ENCODE measurements at regions of chr1 and their contacts with region 1.

Region 1: GRCh38 chr1:221708987-221709386 is 32.9 kb downstream of the DUSP10 start:
- DNase-seq: peak; percentile 47
- ATAC-seq: no peak
- H3K4me3 Mint-ChIP-seq: no peak overlapping the region
- H3K27ac Mint-ChIP-seq: peak overlapping the region; percentile 83
- H3K4me1 Mint-ChIP-seq: peaks cover 58% of the 10 kb centered on the region
- H3K27me3 Mint-ChIP-seq: no peaks in the 10 kb centered on the region

Region 2: DNA sequence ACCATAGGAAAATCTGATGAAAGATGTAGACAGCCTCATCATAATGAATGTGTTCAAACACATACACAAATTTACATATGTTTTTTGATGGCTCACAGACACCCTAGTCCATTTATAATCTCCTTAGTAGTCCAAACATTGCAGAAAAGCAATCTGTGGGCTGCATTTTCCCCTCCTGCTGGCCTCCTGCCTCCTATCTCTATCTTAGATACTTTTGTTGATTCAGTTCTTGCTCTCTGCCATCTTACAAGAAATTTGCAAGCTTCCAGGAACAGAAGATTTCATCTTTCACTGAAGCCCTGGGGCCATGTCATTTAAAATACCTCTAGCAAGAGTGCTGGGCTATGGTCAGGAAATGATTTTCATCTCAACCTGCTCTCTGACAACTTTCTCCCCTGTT is 17.7 kb before region 1 on chr1:
- CTCF ChIA-PET with region 1: no interaction called
- POLR2A ChIA-PET with region 1: interaction called, 3 read pairs
- intact Hi-C with region 1: loop called in 1 of 2 experiments (anchors 2 kb)
- DNase-seq: no peak
- ATAC-seq: no peak
- H3K4me3 Mint-ChIP-seq: no peak overlapping the region
- H3K27ac Mint-ChIP-seq: no peak overlapping the region
- H3K4me1 Mint-ChIP-seq: peaks cover 5% of the 10 kb centered on the region
- H3K27me3 Mint-ChIP-seq: no peaks in the 10 kb centered on the region

Region 3: GRCh38 chr1:221725735-221726672 is 17.0 kb after region 1 on chr1:
- CTCF ChIA-PET with region 1: interaction called, 6 read pairs
- POLR2A ChIA-PET with region 1: interaction called, 10 read pairs
- intact Hi-C with region 1: loop called (anchors 1 kb)
- DNase-seq: no peak
- ATAC-seq: peak; percentile 86
- H3K4me3 Mint-ChIP-seq: peak overlapping the region; percentile 39
- H3K27ac Mint-ChIP-seq: peak overlapping the region; percentile 94
- H3K4me1 Mint-ChIP-seq: peaks cover 78% of the 10 kb centered on the region
- H3K27me3 Mint-ChIP-seq: no peaks in the 10 kb centered on the region

Region 4: GRCh38 chr1:221753828-221754188 is 44.8 kb after region 1 on chr1:
- CTCF ChIA-PET with region 1: no interaction called
- POLR2A ChIA-PET with region 1: no interaction called
- intact Hi-C with region 1: loop called in 1 of 2 experiments (anchors 1 kb)
- DNase-seq: no peak
- ATAC-seq: peak; percentile 47
- H3K4me3 Mint-ChIP-seq: no peak overlapping the region
- H3K27ac Mint-ChIP-seq: peak overlapping the region; percentile 77
- H3K4me1 Mint-ChIP-seq: peaks cover 37% of the 10 kb centered on the region
- H3K27me3 Mint-ChIP-seq: peaks cover 5% of the 10 kb centered on the region

Region 5: GRCh38 chr1:221766210-221766609 is 57.2 kb after region 1 on chr1:
- CTCF ChIA-PET with region 1: no interaction called
- POLR2A ChIA-PET with region 1: no interaction called
- intact Hi-C with region 1: no loop called
- DNase-seq: no peak
- ATAC-seq: no peak
- H3K4me3 Mint-ChIP-seq: no peak overlapping the region
- H3K27ac Mint-ChIP-seq: no peak overlapping the region
- H3K4me1 Mint-ChIP-seq: peaks cover 11% of the 10 kb centered on the region
- H3K27me3 Mint-ChIP-seq: no peaks in the 10 kb centered on the region

Region 6: DNA sequence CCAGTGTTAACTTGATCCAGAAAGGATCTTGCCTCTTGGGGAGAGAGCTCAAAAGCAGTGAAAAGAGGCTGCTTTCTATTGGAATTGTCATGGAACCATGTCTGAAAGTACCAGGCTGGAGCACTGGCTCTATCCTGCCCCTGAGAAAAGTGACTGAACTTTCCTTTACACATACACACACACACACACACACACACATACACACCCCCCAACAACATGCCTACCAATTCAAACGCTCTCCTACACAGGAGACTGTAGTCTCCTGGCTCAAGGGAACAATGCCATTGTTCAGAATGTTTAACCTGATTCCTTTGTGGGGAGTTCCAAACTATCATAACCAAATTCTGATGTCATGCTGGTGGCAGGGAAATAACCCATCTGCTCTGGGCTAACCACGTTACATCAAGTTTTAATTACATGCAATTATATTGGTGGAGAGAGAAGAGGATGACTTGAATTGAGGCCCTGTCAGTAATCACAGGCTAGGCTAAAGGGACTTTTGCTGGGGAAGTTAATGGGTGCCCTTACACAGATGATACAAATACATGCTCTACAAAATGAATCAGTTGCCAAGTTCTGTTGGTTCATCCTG is 85.2 kb after region 1 on chr1:
- CTCF ChIA-PET with region 1: no interaction called
- POLR2A ChIA-PET with region 1: no interaction called
- intact Hi-C with region 1: loop called (anchors 1 kb)
- DNase-seq: peak; percentile 54
- ATAC-seq: peak; percentile 91
- H3K4me3 Mint-ChIP-seq: no peak overlapping the region
- H3K27ac Mint-ChIP-seq: peak overlapping the region; percentile 89
- H3K4me1 Mint-ChIP-seq: peaks cover 34% of the 10 kb centered on the region
- H3K27me3 Mint-ChIP-seq: no peaks in the 10 kb centered on the region

Region 7: DNA sequence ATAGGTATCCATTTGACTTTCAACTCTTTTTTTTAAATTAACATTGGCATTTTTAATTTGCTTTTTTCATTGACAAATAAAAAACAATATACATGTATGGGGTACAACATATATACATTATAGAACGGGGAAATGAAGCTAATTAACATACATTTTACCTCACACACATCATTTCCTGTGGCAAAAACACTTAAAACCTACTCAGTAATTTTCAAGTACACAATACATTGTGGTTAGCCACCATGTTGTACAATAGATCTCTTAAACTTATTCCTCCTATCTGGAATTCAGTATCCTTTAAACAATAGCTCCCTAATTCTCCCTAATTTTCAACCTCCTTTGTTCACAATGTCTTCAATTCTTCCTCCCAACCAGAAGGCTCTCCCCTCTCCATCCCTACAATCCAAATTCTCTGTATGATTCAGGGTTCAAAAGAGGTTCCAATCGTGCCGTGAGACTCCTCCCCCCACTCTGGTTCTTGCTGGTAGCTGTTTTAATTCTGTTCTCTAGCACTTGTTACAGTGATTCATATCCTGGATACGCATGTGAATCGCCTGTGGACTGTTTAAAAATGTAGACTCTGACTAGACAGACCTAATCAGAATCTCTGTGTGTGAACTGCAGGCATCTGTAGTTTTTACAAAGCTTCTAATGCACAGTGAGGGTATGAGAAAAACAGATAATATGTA is 120.5 kb after region 1 on chr1:
- CTCF ChIA-PET with region 1: no interaction called
- POLR2A ChIA-PET with region 1: no interaction called
- intact Hi-C with region 1: loop called (anchors 1 kb)
- DNase-seq: peak; percentile 79
- ATAC-seq: peak; percentile 96
- H3K4me3 Mint-ChIP-seq: peak overlapping the region; percentile 31
- H3K27ac Mint-ChIP-seq: peak overlapping the region; percentile 86
- H3K4me1 Mint-ChIP-seq: peaks cover 55% of the 10 kb centered on the region
- H3K27me3 Mint-ChIP-seq: no peaks in the 10 kb centered on the region

Region 8: GRCh38 chr1:221994274-221994698 is 285.3 kb after region 1 on chr1:
- CTCF ChIA-PET with region 1: no interaction called
- POLR2A ChIA-PET with region 1: no interaction called
- intact Hi-C with region 1: loop called in 1 of 2 experiments (anchors 2 kb)
- DNase-seq: peak; percentile 50
- ATAC-seq: peak; percentile 81
- H3K4me3 Mint-ChIP-seq: no peak overlapping the region
- H3K27ac Mint-ChIP-seq: peak overlapping the region; percentile 89
- H3K4me1 Mint-ChIP-seq: peaks cover 32% of the 10 kb centered on the region
- H3K27me3 Mint-ChIP-seq: no peaks in the 10 kb centered on the region

Region 9: GRCh38 chr1:222347627-222348026 is 638.6 kb after region 1 on chr1:
- CTCF ChIA-PET with region 1: no interaction called
- POLR2A ChIA-PET with region 1: no interaction called
- intact Hi-C with region 1: no loop called
- DNase-seq: no peak
- ATAC-seq: no peak
- H3K4me3 Mint-ChIP-seq: no peak overlapping the region
- H3K27ac Mint-ChIP-seq: no peak overlapping the region
- H3K4me1 Mint-ChIP-seq: no peaks in the 10 kb centered on the region
- H3K27me3 Mint-ChIP-seq: no peaks in the 10 kb centered on the region

Measured in activated CD4-positive, alpha-beta T cell treated with anti-CD3 and anti-CD28 coated beads for 36 hours (primary cell).